Breast epithelium (tissue), 4 donors: ENCODE measurements at regions of chr6 and their contacts with region 1.

Region 1: DNA sequence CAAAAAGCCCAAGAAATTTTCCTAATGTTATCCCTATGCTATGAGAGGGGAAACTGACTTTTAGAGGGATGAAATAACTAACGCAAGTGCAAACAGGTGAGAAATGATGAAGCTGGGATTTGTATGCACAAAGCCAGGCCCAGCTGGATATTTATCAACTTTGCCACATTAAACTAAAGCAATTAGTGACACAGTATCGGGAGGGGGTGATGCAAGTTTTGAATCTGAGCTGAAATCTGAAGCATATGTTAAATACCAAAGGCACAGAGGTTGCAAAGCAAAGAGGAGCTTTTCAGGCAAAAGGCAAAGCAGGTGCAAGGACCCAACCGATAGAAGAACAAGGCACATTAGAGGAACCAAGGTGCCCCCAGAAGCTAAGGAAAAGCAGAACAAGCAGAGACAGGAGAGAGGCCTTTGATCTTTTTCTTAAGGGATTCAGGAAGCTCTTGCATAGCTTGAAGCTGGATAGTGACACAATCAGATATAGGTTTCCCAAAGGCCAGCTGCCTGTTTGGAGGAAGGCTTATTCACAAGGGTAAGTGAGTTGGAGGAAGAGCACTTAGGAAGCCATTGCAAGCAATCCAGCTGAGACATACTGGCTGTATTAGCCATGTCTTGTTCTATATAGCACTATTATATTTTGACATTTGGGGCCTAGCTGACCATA is 207.5 kb downstream of the HIVEP2 start:
- DNase-seq: no peak
- H3K4me3 ChIP-seq: no peak overlapping the region
- H3K27ac ChIP-seq: no peak overlapping the region
- H3K4me1 ChIP-seq: no peaks in the 10 kb centered on the region
- H3K27me3 ChIP-seq: no peaks in the 10 kb centered on the region
- CTCF ChIP-seq: no peak
- POLR2A ChIP-seq: no peak

Region 2: DNA sequence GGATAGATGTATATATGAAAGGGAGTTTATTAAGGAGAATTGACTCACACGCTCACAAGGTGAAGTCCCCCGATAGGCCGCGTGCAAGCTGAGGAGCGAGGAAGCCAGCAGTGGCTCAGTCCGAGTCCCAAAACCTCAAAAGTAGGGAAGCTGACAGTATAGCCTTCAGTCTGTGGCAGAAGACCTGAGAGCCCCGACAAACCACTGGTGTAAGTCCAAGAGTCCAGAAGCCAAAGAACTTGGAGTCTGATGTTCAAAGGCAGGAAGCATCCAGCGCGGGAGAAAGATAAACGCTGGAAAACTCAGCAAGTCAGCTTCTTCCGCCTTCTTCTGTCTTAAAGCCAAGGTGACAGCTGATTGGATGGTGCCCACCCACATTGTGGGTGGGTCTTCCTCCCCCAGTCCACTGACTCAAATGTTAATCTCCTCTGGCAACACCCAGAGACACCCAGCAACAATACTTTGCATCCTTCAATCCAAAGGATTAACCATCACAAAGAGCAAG is 707.3 kb before region 1 on chr6:
- intact Hi-C with region 1: no loop called
- DNase-seq: no peak
- H3K4me3 ChIP-seq: no peak overlapping the region
- H3K27ac ChIP-seq: no peak overlapping the region
- H3K4me1 ChIP-seq: no peaks in the 10 kb centered on the region
- H3K27me3 ChIP-seq: no peaks in the 10 kb centered on the region
- CTCF ChIP-seq: no peak
- POLR2A ChIP-seq: no peak

Region 3: GRCh38 chr6:142692942-142693341 is 44.6 kb before region 1 on chr6:
- intact Hi-C with region 1: loop called (anchors 2 kb)
- DNase-seq: peak in 1 of 2 donors; percentile 42
- H3K4me3 ChIP-seq: peak overlapping the region in 1 of 3 donors; percentile 35
- H3K27ac ChIP-seq: peak overlapping the region in 1 of 2 donors; percentile 56
- H3K4me1 ChIP-seq: peaks cover 0 to 4% of the 10 kb centered on the region in 2 donors
- H3K27me3 ChIP-seq: no peaks in the 10 kb centered on the region
- CTCF ChIP-seq: peak; percentile 86 to 95 (median 95)
- POLR2A ChIP-seq: no peak

Region 4: DNA sequence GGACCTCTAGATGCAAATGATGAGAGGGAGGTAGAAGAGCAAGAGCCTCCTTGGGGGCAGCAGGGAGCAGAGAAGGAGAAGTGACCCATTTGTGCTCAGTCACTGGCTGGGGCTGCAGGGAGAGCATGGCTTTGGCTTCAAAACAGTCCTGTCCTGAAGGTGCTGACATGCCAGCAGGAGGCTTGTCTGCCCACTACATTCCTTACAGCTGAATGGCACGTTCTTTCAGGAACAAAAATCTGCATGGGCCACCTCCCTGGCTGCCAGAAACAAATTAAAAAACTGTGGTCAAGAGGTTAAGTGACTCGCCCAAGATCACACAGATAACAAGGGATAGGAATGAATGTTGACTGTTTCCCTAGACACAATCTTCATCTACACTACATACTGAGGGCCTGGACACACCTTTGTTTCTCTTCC is 18.7 kb after region 1 on chr6:
- intact Hi-C with region 1: no loop called
- DNase-seq: no peak
- H3K4me3 ChIP-seq: no peak overlapping the region
- H3K27ac ChIP-seq: no peak overlapping the region
- H3K4me1 ChIP-seq: no peaks in the 10 kb centered on the region
- H3K27me3 ChIP-seq: no peaks in the 10 kb centered on the region
- CTCF ChIP-seq: no peak
- POLR2A ChIP-seq: no peak

Region 5: GRCh38 chr6:143385636-143386035 is 648.1 kb after region 1 on chr6:
- intact Hi-C with region 1: no loop called
- DNase-seq: no peak
- H3K4me3 ChIP-seq: no peak overlapping the region
- H3K27ac ChIP-seq: no peak overlapping the region
- H3K4me1 ChIP-seq: no peaks in the 10 kb centered on the region
- H3K27me3 ChIP-seq: no peaks in the 10 kb centered on the region
- CTCF ChIP-seq: no peak
- POLR2A ChIP-seq: no peak